ENCODE measurements at regions of chr18 and their contacts with region 1.

Region 1: DNA sequence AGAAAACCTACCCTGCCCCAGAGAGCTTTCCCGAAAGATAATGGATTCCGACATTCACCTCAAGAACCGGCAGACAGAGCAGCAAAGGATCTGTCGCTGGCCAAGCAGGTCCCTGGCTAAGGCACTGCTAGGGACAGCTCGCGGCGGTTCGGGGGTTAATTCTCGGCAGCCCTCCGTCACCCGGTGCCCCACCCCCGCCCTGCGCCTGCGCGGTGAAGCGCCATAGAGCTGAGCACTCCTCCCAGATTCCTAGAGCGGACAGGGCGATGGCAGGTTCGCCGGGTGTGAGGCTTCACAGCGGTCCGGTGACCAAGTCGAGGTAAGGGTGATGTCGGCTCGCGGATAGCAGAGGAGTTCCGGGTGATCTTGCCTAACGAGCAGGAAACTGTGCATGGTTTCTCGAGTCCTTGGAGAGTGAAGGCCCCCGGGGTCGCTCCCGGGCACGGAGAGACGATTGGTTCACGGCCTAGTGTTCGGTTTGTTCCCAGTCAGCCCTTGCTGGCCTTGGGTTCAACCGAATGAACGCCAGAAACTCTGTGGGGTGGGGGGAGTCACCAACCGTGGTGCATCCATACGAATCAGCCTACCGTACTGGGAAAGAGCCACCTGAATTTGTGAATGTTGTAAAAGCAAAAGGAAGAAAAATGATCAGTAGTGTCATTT is at the start of gene ZSCAN30:
- DNase-seq: peak; percentile 96
- H3K4me3 ChIP-seq: peak within 1 kb of the TSS; percentile 76
- H3K27ac ChIP-seq: peak within 1 kb of the TSS; percentile 56
- H3K4me1 ChIP-seq: no peaks in the 10 kb centered on the region
- H3K27me3 ChIP-seq: no peaks in the 10 kb centered on the region
- CTCF ChIP-seq: no peak
- total RNA-seq, gene ZSCAN30: 7.8 to 9.4 TPM

Region 2: GRCh38 chr18:35071819-35072247 is 218.4 kb before region 1 on chr18:
- intact Hi-C with region 1: no loop called
- DNase-seq: no peak
- H3K4me3 ChIP-seq: no peak overlapping the region
- H3K27ac ChIP-seq: no peak overlapping the region
- H3K4me1 ChIP-seq: no peaks in the 10 kb centered on the region
- H3K27me3 ChIP-seq: no peaks in the 10 kb centered on the region
- CTCF ChIP-seq: no peak

Region 3: GRCh38 chr18:35334821-35335220 is 44.6 kb after region 1 on chr18:
- intact Hi-C with region 1: loop called (anchors 5 kb)
- DNase-seq: no peak
- H3K4me3 ChIP-seq: no peak overlapping the region
- H3K27ac ChIP-seq: no peak overlapping the region
- H3K4me1 ChIP-seq: no peaks in the 10 kb centered on the region
- H3K27me3 ChIP-seq: no peaks in the 10 kb centered on the region
- CTCF ChIP-seq: no peak

Region 4: DNA sequence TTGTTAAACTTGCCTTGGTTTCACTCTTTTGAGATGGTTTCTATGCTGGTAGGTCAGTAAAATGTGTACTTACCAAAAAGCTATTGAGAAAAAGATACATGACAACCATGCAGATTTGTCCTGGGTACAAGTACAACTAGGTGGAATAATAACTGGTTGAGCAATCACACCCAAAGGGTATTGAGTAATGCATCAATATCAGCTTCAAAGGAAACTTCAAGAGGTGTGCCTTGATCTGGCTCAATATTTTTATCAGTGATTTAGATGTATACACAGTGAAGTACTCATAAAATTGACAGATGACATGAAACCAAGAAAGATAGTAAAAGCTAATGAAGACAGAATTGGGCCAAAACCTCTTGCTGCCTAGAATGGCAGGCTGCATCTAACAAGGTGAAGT is 269.7 kb after region 1 on chr18:
- intact Hi-C with region 1: no loop called
- DNase-seq: no peak
- H3K4me3 ChIP-seq: no peak overlapping the region
- H3K27ac ChIP-seq: no peak overlapping the region
- H3K4me1 ChIP-seq: no peaks in the 10 kb centered on the region
- H3K27me3 ChIP-seq: no peaks in the 10 kb centered on the region
- CTCF ChIP-seq: no peak

Measured in colonic mucosa (tissue), 4 donors.